ENCODE measurements at regions of chr4 and their contacts with region 1.

Region 1: DNA sequence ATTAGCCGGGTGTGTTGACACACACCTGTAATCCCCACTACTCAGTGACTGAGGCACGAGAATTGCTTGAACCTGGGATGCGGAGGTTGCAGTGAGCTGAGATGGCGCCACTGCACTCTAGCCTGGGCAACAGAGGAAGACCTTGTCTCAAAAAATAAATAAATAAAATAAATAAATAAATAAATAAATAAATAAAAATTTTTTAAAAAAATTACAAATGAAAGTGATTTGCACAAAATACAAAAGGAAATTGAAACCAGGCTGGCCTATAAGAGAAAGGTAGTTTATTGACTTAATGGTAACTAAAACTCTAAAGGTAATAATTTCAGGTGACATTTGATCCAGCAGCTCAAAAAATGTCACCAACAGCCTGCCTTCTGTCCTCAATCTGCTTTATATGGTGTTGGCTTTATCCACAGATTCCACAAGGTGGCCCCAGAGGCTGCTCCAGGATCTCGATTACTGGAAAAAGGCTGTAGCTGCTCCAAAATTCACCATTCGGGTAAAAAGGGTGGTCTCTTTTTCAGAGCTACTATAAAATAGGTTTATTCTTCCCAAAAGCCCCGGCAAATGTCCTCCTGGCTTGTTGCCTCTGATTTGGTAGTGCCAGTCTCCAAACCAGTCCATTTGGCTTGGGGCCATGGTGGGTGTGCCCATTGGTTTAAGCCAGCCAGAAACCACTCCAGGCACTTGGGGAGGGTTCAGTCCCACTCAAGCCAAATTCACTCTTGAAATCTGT is 61.4 kb upstream of the TRIM2 start:
- DNase-seq: peak; percentile 85
- H3K4me3 Mint-ChIP-seq: no peak overlapping the region
- H3K27ac Mint-ChIP-seq: no peak overlapping the region
- H3K4me1 Mint-ChIP-seq: peaks cover 17% of the 10 kb centered on the region
- H3K27me3 Mint-ChIP-seq: no peaks in the 10 kb centered on the region

Region 2: GRCh38 chr4:153153339-153153871 is 10.5 kb after region 1 on chr4:
- CTCF ChIA-PET with region 1: interaction called, 36 read pairs
- intact Hi-C with region 1: loop called (anchors 1 kb)
- DNase-seq: peak; percentile 91
- H3K4me3 Mint-ChIP-seq: peak overlapping the region; percentile 80
- H3K27ac Mint-ChIP-seq: peak overlapping the region; percentile 86
- H3K4me1 Mint-ChIP-seq: peaks cover 58% of the 10 kb centered on the region
- H3K27me3 Mint-ChIP-seq: no peaks in the 10 kb centered on the region

Region 3: DNA sequence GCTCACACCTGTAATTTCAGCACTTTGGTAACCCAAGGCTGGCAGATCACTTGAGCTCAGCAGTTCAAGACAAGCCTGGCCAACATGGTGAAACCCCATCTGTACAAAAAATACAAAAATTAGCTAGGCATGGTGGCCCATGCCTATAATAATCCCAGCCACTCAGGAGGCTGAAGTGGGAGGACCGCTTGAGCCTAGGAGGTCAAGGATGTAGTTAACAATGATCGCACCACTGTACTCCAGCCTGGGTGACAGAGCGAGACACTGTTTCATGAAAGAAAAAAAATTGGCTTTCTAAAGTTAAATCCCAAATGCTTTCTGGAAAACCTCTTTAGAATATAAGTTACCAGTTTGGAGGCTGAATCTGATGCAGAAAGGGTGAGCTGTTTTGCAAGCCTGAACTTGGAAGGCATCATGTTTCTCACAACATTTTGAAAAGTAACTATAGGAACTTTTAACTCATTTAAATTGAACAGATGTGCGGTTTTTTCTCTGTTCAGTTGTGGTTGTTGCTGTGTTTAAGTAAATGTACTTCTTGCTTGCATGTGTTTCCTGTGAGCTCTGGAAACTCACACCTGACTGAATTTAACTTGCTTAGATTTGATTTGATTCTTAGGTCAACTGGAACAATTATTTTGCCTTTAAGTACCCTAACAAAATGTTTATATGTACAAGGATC is 283.5 kb after region 1 on chr4:
- CTCF ChIA-PET with region 1: interaction called, 3 read pairs
- intact Hi-C with region 1: loop called (anchors 5 kb)
- DNase-seq: no peak
- H3K4me3 Mint-ChIP-seq: no peak overlapping the region
- H3K27ac Mint-ChIP-seq: peak overlapping the region; percentile 63
- H3K4me1 Mint-ChIP-seq: peaks cover 65% of the 10 kb centered on the region
- H3K27me3 Mint-ChIP-seq: no peaks in the 10 kb centered on the region

Region 4: GRCh38 chr4:153643406-153644383 is 500.8 kb after region 1 on chr4:
- CTCF ChIA-PET with region 1: interaction called, 13 read pairs
- intact Hi-C with region 1: loop called (anchors 1 kb)
- DNase-seq: no peak
- H3K4me3 Mint-ChIP-seq: no peak overlapping the region
- H3K27ac Mint-ChIP-seq: no peak overlapping the region
- H3K4me1 Mint-ChIP-seq: peaks cover 17% of the 10 kb centered on the region
- H3K27me3 Mint-ChIP-seq: no peaks in the 10 kb centered on the region

Region 5: DNA sequence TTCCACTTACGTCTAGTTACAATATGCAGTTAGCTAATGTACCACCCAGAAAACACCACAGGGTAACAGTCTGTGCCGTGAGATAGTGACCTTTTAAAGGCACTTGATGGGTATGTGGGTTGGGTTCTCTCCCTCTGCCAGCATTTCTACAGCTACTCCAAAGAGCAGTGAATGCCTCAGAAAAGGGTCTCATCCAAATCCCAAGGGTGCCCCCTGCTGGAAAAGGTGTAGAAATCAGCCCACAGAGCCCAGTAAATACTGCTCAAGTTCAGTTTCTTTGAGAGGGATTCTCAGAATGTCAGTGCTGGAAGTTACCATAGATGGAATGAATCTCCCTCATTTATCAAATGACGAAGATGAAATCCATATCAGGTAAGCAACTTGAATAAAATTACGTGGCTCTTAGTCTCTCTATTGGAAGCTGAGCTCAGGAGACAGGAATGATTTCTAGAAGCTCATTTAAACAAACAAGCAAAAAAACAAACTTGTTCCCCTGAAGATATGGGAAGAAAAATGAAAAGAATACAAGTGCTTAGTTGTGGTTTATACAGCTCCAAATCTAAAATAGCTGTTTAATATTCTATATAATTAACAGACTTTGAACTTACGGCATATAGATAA is 607.4 kb after region 1 on chr4:
- CTCF ChIA-PET with region 1: interaction called, 3 read pairs
- intact Hi-C with region 1: loop called (anchors 2 kb)
- DNase-seq: peak; percentile 87
- H3K4me3 Mint-ChIP-seq: no peak overlapping the region
- H3K27ac Mint-ChIP-seq: no peak overlapping the region
- H3K4me1 Mint-ChIP-seq: peaks cover 11% of the 10 kb centered on the region
- H3K27me3 Mint-ChIP-seq: no peaks in the 10 kb centered on the region